Endothelial cell of umbilical vein (primary cell): ENCODE measurements at regions of chr1 and their contacts with region 1.

Region 1: GRCh38 chr1:193406901-193407300 is 220.5 kb upstream of the B3GALT2 start:
- DNase-seq: peak; percentile 64
- H3K4me3 ChIP-seq: no peak overlapping the region
- H3K27ac ChIP-seq: no peak overlapping the region
- H3K4me1 ChIP-seq: peaks cover 11% of the 10 kb centered on the region
- H3K27me3 ChIP-seq: no peaks in the 10 kb centered on the region
- CTCF ChIP-seq: peak; percentile 45 to 59
- POLR2A ChIP-seq: no peak

Region 2: GRCh38 chr1:193059268-193060225 is 347.4 kb before region 1 on chr1 and contains the starts of genes RO60 and UCHL5:
- CTCF ChIA-PET with region 1: no interaction called
- POLR2A ChIA-PET with region 1: no interaction called
- dilution Hi-C with region 1: no loop called
- intact Hi-C with region 1: no loop called
- DNase-seq: peak; percentile 99
- H3K4me3 ChIP-seq: peak within 1 kb of the TSS; percentile 49 to 86 (median 78)
- H3K27ac ChIP-seq: peak within 1 kb of the TSS; percentile 65
- H3K4me1 ChIP-seq: peaks cover 29% of the 10 kb centered on the region
- H3K27me3 ChIP-seq: no peaks in the 10 kb centered on the region
- CTCF ChIP-seq: no peak
- POLR2A ChIP-seq: peak; percentile 85
- total RNA-seq, gene RO60: 60.3 and 61.8 TPM in 2 replicates
- total RNA-seq, gene UCHL5: 45.6 and 50.8 TPM in 2 replicates

Region 3: DNA sequence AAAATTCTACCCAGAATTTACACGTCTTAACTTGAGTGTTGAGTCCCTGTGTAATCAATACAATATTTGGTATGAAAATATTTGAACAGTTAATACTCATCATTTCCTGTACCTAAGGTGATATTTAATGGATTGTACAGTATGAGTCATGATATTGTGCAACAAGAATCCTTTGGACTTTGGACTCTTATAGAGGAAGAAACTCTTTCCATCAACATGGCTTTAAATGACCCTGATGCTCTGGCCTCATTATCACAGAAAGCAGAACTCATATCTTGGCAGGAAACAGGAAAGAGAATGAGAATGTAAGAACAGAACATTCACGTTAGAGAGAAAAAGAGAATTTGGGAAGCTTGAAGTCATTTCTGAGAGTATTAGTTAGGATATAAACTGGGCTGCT is 51.7 kb before region 1 on chr1:
- CTCF ChIA-PET with region 1: no interaction called
- POLR2A ChIA-PET with region 1: no interaction called
- dilution Hi-C with region 1: no loop called
- intact Hi-C with region 1: no loop called
- DNase-seq: peak; percentile 59
- H3K4me3 ChIP-seq: no peak overlapping the region
- H3K27ac ChIP-seq: no peak overlapping the region
- H3K4me1 ChIP-seq: peaks cover 11% of the 10 kb centered on the region
- H3K27me3 ChIP-seq: no peaks in the 10 kb centered on the region
- CTCF ChIP-seq: no peak
- POLR2A ChIP-seq: no peak

Region 4: GRCh38 chr1:193629875-193630274 is 223.0 kb after region 1 on chr1:
- CTCF ChIA-PET with region 1: no interaction called
- POLR2A ChIA-PET with region 1: no interaction called
- dilution Hi-C with region 1: no loop called
- intact Hi-C with region 1: loop called (anchors 5 kb)
- DNase-seq: peak; percentile 52
- H3K4me3 ChIP-seq: no peak overlapping the region
- H3K27ac ChIP-seq: peak overlapping the region; percentile 66
- H3K4me1 ChIP-seq: peaks cover 27% of the 10 kb centered on the region
- H3K27me3 ChIP-seq: no peaks in the 10 kb centered on the region
- CTCF ChIP-seq: no peak
- POLR2A ChIP-seq: no peak

Region 5: GRCh38 chr1:193763266-193763665 is 356.4 kb after region 1 on chr1:
- CTCF ChIA-PET with region 1: no interaction called
- POLR2A ChIA-PET with region 1: no interaction called
- dilution Hi-C with region 1: no loop called
- intact Hi-C with region 1: loop called (anchors 2 kb)
- DNase-seq: peak; percentile 80
- H3K4me3 ChIP-seq: no peak overlapping the region
- H3K27ac ChIP-seq: no peak overlapping the region
- H3K4me1 ChIP-seq: peaks cover 6% of the 10 kb centered on the region
- H3K27me3 ChIP-seq: no peaks in the 10 kb centered on the region
- CTCF ChIP-seq: no peak
- POLR2A ChIP-seq: no peak

Region 6: GRCh38 chr1:194295685-194296084 is 888.8 kb after region 1 on chr1:
- CTCF ChIA-PET with region 1: no interaction called
- POLR2A ChIA-PET with region 1: no interaction called
- dilution Hi-C with region 1: no loop called
- intact Hi-C with region 1: loop called (anchors 2 kb)
- DNase-seq: peak; percentile 52
- H3K4me3 ChIP-seq: no peak overlapping the region
- H3K27ac ChIP-seq: no peak overlapping the region
- H3K4me1 ChIP-seq: no peaks in the 10 kb centered on the region
- H3K27me3 ChIP-seq: no peaks in the 10 kb centered on the region
- CTCF ChIP-seq: peak; percentile 28 to 54
- POLR2A ChIP-seq: no peak